HepG2 (cell line): ENCODE measurements at regions of chr11 and their contacts with region 1.

Region 1: DNA sequence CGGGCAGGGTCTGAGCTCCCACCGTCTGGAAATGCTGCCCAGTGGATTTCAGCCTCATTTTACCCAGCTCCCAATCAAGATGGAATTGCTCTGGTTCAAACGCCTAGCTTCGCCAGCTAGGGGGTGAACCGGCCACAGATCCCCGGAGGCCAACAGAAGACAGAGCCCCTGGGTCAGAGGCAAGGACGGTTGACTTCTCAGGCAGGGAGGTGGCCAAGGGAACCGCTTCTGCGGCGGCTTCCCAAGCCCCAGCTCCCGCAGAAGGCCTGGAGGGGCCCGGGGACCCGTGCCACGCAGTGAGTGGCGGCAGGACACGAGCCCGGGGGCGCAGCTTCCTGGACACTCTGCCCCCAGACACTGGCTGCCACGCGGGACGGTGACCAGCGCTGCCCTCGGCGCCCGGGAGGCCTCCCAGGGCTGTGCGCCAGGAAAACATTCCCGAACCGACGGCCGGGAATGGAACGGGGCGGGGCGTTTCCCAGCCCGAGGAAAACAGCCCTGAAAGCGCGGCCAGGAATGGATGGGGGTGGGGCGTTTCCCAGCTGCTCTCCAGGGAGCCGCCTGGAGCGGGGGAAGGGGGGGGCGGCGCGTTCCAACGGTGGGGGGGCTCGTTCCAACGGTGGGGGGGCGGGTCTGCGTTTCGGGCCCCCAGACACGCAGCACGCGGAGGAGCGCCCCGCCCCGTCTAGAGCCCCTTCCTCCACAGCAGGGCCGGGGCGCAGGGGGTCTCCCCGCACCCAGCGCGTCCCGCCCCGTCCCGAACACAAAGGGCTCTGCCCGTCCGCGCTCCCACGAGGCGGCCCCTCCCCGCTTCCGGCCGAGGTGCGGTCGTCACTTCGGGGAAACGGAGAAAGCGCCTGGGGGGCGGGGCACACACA is 13.5 kb upstream of the B4GALNT4 start:
- DNase-seq: peak; percentile 90
- ATAC-seq: peak; percentile 82
- H3K4me3 ChIP-seq: peak overlapping the region; percentile 28 to 70 (median 46); a peak in 5 of 6 replicates
- H3K27ac ChIP-seq: peak overlapping the region; percentile 95
- H3K4me1 ChIP-seq: peaks cover 51% of the 10 kb centered on the region
- H3K27me3 ChIP-seq: peaks cover 0 to 3% of the 10 kb centered on the region in 2 experiments; a peak in 1 of 5 replicates
- CTCF ChIP-seq: no peak; the same call in 1 of the 2 replicates
- EP300 ChIP-seq: peak in 1 of 2 experiments; percentile 38; a peak in 2 of 4 replicates
- POLR2A ChIP-seq: peak; percentile 70 to 74
- RAD21 ChIP-seq: peak; percentile 57

Region 2: DNA sequence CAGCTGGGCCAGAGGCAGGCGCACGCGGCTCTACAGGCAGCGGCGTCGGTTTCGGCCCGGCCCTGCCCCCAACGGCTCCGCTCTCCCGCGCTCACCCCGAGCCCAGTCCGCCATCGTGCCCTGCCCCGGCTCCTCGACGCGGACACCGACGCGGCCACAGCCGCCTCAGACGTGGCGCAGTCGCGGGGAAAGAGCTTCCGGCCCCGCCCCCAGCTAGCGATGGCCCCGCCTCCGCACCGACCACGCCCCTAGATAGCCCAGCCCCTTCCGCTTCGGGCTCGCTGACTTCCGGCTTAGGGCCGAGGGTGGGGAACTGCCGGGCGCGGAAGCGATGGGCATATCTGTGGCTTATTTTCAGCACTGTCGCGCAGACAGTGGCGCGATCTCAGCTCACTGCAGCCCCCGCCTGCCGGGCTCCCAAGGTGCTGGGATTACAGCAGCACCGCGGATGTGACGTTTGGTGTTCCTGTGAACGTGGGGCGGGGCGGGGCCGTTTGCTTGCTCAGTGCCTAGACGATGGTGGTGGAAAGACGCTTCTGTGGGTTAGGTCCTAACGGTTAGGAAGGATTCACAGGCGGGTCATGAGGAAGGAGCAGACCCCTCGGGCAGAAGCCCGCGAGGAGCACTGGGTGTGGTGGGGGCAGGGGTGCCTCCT is 148.5 kb before region 1 on chr11 and contains the starts of genes BET1L and RIC8A:
- CTCF ChIA-PET with region 1: no interaction called
- POLR2A ChIA-PET with region 1: interaction called, 13 read pairs
- in situ Hi-C with region 1: no loop called
- intact Hi-C with region 1: no loop called
- DNase-seq: peak; percentile 95
- ATAC-seq: peak; percentile 74
- H3K4me3 ChIP-seq: peak within 1 kb of the TSS; percentile 75 to 90 (median 89)
- H3K27ac ChIP-seq: peak within 1 kb of the TSS; percentile 96
- H3K4me1 ChIP-seq: peaks cover 36% of the 10 kb centered on the region
- H3K27me3 ChIP-seq: no peaks in the 10 kb centered on the region; a peak in 1 of 5 replicates
- CTCF ChIP-seq: peak; percentile 6; the same call in 1 of the 2 replicates
- EP300 ChIP-seq: no peak
- POLR2A ChIP-seq: peak in 1 of 2 experiments; percentile 79; a peak in 2 of 4 replicates
- RAD21 ChIP-seq: peak; percentile 60
- total RNA-seq, gene BET1L: 26.2 and 27.3 TPM in 2 replicates
- total RNA-seq, gene RIC8A: 62.1 and 65.0 TPM in 2 replicates

Region 3: DNA sequence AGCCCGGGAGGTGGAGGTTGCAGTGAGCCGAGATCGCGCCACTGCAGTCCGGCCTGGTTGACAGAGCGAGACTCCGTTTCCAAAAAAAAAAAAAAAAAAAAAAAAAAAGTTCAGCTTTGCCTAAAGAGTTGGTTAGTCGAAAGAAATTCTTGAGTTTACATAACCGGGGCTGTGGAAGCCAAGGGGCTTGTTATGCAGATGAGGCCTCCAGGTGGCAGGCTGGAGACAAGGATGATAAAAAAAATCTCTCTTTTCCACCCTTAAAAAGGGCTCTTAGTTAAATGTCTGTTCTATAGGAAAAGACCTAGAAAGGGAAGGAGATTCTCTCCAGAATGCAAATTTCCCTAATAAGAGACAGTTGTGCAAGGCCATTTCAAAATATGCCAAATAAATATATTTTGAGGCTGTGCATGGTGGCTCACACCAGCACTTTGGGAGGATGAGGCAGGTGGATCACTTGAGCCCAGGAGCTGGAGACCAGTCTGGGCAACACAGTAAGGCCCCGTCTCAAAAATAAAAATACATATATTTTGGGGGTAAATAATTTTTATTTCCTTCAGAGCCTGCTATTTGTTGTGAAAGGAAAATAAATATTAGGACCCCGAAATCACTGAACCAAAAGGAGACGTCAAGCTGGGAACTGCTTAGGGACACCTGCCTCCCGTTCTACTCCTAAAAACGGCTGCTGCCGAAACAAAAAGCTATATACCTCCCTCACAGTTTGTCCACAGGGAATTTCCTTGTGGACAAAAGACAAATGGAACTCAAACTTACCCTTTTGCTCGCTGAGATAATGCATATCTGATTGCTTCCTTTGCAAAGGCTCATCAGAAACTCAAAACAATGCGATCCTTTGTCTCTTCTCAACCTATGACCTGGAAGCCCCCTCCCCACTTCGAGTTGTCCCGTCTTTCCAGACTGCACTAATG is 50.6 kb before region 1 on chr11:
- CTCF ChIA-PET with region 1: no interaction called
- POLR2A ChIA-PET with region 1: interaction called, 21 read pairs
- in situ Hi-C with region 1: no loop called
- intact Hi-C with region 1: loop called (anchors 5 kb)
- DNase-seq: peak; percentile 61
- ATAC-seq: no peak
- H3K4me3 ChIP-seq: peak overlapping the region in 1 of 3 experiments; percentile 27; a peak in 2 of 6 replicates
- H3K27ac ChIP-seq: no peak overlapping the region
- H3K4me1 ChIP-seq: peaks cover 61% of the 10 kb centered on the region
- H3K27me3 ChIP-seq: peaks cover under 1 to 5% of the 10 kb centered on the region in 2 experiments; a peak in 3 of 5 replicates
- CTCF ChIP-seq: peak; percentile 73
- EP300 ChIP-seq: no peak
- POLR2A ChIP-seq: no peak
- RAD21 ChIP-seq: peak; percentile 13; the same call in 1 of the 2 replicates

Region 4: DNA sequence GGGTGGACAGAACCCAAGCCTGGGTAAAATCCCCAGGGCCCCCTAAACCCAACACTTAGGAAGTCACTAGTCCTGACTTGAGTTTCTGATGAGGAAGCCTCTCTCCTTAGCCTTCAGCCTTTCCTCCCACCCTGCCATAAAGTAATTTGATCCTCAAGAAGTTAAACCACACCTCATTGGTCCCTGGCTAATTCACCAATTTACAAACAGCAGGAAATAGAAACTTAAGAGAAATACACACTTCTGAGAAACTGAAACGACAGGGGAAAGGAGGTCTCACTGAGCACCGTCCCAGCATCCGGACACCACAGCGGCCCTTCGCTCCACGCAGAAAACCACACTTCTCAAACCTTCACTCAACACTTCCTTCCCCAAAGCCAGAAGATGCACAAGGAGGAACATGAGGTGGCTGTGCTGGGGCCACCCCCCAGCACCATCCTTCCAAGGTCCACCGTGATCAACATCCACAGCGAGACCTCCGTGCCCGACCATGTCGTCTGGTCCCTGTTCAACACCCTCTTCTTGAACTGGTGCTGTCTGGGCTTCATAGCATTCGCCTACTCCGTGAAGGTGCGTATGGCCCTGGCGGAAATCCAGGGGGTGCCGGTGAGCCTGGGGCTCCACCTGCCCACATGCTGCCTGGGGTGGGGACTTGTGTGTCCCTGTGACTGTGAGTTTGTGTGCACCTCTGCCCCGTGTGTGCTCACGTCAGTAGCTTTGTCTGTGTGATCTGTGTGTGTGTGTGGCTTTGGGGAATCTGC is 41.9 kb before region 1 on chr11 and contains the start of gene IFITM1:
- CTCF ChIA-PET with region 1: no interaction called
- POLR2A ChIA-PET with region 1: interaction called, 12 read pairs
- in situ Hi-C with region 1: no loop called
- intact Hi-C with region 1: loop called (anchors 5 kb)
- DNase-seq: no peak
- ATAC-seq: peak; percentile 9
- H3K4me3 ChIP-seq: peak within 1 kb of the TSS; percentile 12 to 55 (median 44); a peak in 4 of 6 replicates
- H3K27ac ChIP-seq: no peak within 1 kb of the TSS
- H3K4me1 ChIP-seq: peaks cover 63% of the 10 kb centered on the region
- H3K27me3 ChIP-seq: no peaks in the 10 kb centered on the region
- CTCF ChIP-seq: peak; percentile 31
- EP300 ChIP-seq: no peak
- POLR2A ChIP-seq: no peak
- RAD21 ChIP-seq: no peak
- total RNA-seq, gene IFITM1: 0.38 TPM in 1 of 2 replicates, not detected in the other

Region 5: GRCh38 chr11:326842-327580 is 28.8 kb before region 1 on chr11:
- CTCF ChIA-PET with region 1: no interaction called
- POLR2A ChIA-PET with region 1: interaction called, 85 read pairs
- in situ Hi-C with region 1: no loop called
- intact Hi-C with region 1: loop called (anchors 2 kb)
- DNase-seq: peak; percentile 36
- ATAC-seq: peak; percentile 45
- H3K4me3 ChIP-seq: peak overlapping the region in 2 of 3 experiments; percentile 37 to 64; a peak in 4 of 6 replicates
- H3K27ac ChIP-seq: peak overlapping the region; percentile 49
- H3K4me1 ChIP-seq: peaks cover 64% of the 10 kb centered on the region
- H3K27me3 ChIP-seq: no peaks in the 10 kb centered on the region
- CTCF ChIP-seq: no peak
- EP300 ChIP-seq: no peak
- POLR2A ChIP-seq: no peak
- RAD21 ChIP-seq: no peak

Region 6: GRCh38 chr11:340539-341512 is 15.0 kb before region 1 on chr11:
- CTCF ChIA-PET with region 1: no interaction called
- POLR2A ChIA-PET with region 1: interaction called, 10 read pairs
- in situ Hi-C with region 1: no loop called
- intact Hi-C with region 1: no loop called
- DNase-seq: no peak
- ATAC-seq: no peak
- H3K4me3 ChIP-seq: no peak overlapping the region
- H3K27ac ChIP-seq: no peak overlapping the region
- H3K4me1 ChIP-seq: peaks cover 10% of the 10 kb centered on the region
- H3K27me3 ChIP-seq: peaks cover 1 to 10% of the 10 kb centered on the region in 2 experiments; a peak in 3 of 5 replicates
- CTCF ChIP-seq: no peak
- EP300 ChIP-seq: no peak
- POLR2A ChIP-seq: no peak
- RAD21 ChIP-seq: no peak

Region 7: DNA sequence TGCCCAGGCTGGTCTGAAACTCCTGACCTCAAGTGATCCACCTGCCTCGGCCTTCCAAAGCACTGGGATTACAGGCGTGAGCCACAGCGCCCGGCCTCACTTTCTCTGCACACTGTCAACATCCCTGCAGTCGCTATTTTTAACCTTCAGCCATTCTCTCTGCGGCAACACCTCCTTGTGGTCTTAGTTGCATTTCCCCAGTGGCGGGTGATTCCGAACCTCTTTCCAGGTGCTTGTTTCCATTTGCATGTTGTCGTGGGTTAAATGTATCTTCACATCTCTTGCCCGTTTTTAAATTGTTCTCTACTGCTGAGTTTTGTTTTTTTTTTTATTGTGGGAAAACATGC is 273.4 kb after region 1 on chr11:
- CTCF ChIA-PET with region 1: no interaction called
- POLR2A ChIA-PET with region 1: no interaction called
- in situ Hi-C with region 1: no loop called
- intact Hi-C with region 1: no loop called
- DNase-seq: no peak
- ATAC-seq: no peak
- H3K4me3 ChIP-seq: no peak overlapping the region
- H3K27ac ChIP-seq: no peak overlapping the region
- H3K4me1 ChIP-seq: peaks cover 21% of the 10 kb centered on the region
- H3K27me3 ChIP-seq: no peaks in the 10 kb centered on the region
- CTCF ChIP-seq: no peak
- EP300 ChIP-seq: no peak
- POLR2A ChIP-seq: no peak
- RAD21 ChIP-seq: no peak

Region 8: DNA sequence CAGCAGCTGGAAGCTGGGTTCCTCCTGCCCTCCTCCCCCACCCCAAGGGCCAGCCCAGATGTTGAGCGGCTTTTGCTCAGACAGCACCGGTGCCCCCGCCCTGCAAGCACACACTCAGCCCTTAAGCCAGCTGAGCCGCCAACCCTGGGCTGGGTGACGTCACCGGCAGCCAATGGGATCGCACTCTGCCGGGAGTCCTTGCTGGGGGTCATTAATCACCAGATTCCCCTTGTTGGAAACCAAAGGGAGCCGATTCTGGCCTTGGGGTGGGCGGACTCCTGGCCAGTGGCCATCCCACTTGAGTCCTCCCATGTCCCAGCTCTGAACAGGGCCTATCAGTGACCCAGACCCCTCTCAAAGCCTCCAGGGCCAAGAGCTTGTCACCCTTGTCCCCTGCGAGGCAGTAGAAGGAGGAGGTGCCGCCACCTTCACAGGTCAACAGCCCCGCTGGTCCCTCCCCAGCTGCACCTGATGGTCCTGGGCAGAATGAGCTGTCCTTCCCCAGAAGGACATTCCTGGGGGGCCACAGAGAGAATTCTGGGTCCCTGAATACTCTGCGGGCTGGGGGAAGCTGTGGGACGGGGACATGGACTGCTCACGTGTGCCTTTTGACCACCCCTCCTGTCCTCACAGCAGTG is 1208.8 kb after region 1 on chr11:
- CTCF ChIA-PET with region 1: no interaction called
- POLR2A ChIA-PET with region 1: no interaction called
- in situ Hi-C with region 1: no loop called
- intact Hi-C with region 1: no loop called
- DNase-seq: no peak
- ATAC-seq: no peak
- H3K4me3 ChIP-seq: no peak overlapping the region
- H3K27ac ChIP-seq: no peak overlapping the region
- H3K4me1 ChIP-seq: peaks cover 15% of the 10 kb centered on the region
- H3K27me3 ChIP-seq: no peaks in the 10 kb centered on the region
- CTCF ChIP-seq: no peak
- EP300 ChIP-seq: no peak
- POLR2A ChIP-seq: no peak
- RAD21 ChIP-seq: no peak